HEK293 (cell line): ENCODE measurements at regions of chr6 and their contacts with region 1.

Region 1: DNA sequence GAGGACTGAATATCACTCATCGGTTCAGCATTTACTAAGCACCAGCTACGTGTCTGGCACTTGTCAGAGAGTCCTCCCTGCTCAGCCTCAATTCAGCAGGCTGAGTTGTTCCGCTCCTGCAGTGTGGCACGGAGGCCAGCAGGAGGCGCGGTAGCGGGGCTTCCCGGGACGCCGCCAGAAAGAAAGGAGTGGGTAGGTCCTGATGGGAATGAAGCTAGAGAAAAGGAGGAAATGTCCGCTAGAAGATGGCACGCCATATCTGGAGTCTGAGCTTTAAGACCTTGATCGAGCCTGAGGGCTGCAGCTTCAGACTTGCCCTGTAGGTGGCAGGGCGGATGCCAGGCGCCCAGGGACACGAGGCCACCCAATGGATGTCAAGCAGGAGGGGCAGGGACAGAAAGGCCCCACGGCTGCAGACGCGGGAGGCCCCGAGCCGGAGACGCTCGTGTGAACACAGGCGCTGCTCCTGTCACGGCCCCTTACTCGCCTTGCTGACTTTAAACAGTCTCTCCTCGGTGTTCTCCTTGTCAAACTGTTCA is 18.7 kb downstream of the SERPINB6 start:
- H3K4me3 ChIP-seq: no peak overlapping the region
- H3K27ac ChIP-seq: no peak overlapping the region
- H3K4me1 ChIP-seq: no peaks in the 10 kb centered on the region
- CTCF ChIP-seq: peak; percentile 74

Region 2: DNA sequence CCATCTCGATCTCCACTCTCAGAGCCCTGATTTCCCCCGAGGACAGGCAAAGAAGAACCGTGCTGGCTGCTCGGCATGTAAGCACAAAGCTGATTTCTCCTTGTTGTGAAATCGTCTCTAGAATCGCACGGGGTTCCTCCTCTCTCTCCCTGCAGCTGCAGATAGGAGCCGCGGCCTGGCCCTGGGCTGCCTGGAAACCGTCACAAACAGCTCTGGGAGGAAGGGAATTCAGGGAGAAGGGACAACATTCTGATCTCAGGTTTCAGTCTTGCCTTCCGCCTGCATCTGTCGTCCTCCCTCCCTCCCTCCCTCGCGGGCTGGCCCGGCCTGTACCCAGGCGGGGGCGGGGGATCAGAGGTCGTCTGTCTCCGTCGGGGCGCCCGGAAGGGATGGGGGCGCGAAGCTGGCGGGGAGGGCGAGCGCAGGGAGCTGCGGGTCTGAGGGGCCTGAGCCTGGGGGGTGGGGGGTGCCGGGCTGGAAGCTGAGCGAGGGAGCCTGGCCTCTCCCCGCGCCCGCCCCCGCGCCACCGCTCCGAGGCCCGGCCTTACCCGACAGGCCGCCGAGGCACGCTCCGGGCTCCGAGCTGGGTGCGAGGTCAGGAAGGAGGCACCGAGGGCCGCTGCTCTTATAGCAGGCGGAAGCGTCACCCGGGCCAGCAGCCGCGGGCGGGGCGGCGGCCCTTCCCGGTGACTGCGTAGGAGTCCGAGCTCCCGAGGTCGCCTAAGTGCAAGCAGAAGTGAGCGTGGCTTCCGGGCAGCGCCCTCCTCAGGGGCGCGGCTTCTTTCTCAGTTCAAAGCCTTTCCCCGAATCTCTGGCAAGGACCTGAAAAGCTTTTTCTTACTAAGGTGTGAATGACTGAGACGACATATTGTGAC is 111.1 kb before region 1 on chr6 and contains the start of gene SERPINB1:
- CTCF ChIA-PET with region 1: interaction called, 19 read pairs
- POLR2A ChIA-PET with region 1: no interaction called
- H3K4me3 ChIP-seq: peak within 1 kb of the TSS; percentile 49
- H3K27ac ChIP-seq: peak within 1 kb of the TSS; percentile 54; the same call in 1 of the 2 replicates
- H3K4me1 ChIP-seq: peaks cover 25% of the 10 kb centered on the region
- CTCF ChIP-seq: peak; percentile 64

Region 3: GRCh38 chr6:2921520-2922115 is 31.0 kb before region 1 on chr6:
- CTCF ChIA-PET with region 1: interaction called, 11 read pairs
- POLR2A ChIA-PET with region 1: no interaction called
- H3K4me3 ChIP-seq: no peak overlapping the region
- H3K27ac ChIP-seq: no peak overlapping the region
- H3K4me1 ChIP-seq: no peaks in the 10 kb centered on the region
- CTCF ChIP-seq: no peak

Region 4: DNA sequence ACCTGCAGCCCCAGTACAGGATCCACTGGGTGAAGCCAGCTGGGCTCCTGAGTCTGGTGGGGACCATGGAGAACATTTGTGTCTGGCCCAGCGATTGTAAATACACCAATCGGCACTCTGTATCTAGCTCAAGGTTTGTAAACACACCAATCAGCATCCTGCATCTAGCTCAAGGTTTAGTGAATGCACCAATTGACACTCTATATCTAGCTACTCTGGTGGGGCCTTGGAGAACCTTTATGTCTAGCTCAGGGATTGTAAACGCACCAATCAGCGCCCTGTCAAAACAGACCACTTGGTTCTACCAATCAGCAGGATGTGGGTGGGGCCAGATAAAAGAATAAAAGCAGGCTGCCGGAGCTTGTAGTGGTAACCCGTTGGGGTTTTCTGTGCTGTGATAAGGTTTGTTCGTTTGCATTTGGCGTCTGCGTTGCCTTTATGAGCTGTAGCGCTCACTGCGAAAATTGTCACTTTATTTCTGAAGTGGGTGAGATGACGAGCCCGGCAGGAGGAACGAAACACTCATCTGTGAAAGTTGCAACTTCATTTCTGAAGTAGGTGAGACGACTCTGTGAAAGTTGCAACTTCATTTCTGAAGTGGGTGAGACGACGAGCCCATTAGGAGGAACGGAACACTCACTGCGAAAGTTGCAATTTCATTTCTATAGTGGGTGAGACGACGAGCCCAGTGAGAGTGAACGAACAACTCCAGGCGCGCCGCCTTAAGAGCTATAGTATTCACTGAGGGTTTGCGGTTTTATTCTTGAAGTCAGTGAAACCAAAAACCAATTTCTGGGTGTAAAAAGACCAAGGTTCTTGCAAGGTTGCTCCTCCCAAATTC is 12.4 kb before region 1 on chr6:
- CTCF ChIA-PET with region 1: interaction called, 53 read pairs
- POLR2A ChIA-PET with region 1: interaction called, 5 read pairs
- H3K4me3 ChIP-seq: no peak overlapping the region
- H3K27ac ChIP-seq: no peak overlapping the region
- H3K4me1 ChIP-seq: no peaks in the 10 kb centered on the region
- CTCF ChIP-seq: no peak

Region 5: GRCh38 chr6:2971420-2972218 is 19.0 kb after region 1 on chr6 and contains the start of gene SERPINB6:
- CTCF ChIA-PET with region 1: interaction called, 11 read pairs
- POLR2A ChIA-PET with region 1: interaction called, 4 read pairs
- H3K4me3 ChIP-seq: peak within 1 kb of the TSS; percentile 70
- H3K27ac ChIP-seq: peak within 1 kb of the TSS; percentile 90
- H3K4me1 ChIP-seq: peaks cover 6% of the 10 kb centered on the region
- CTCF ChIP-seq: peak; percentile 47

Region 6: GRCh38 chr6:2976571-2977085 is 24.0 kb after region 1 on chr6:
- CTCF ChIA-PET with region 1: interaction called, 11 read pairs
- POLR2A ChIA-PET with region 1: no interaction called
- H3K4me3 ChIP-seq: no peak overlapping the region
- H3K27ac ChIP-seq: no peak overlapping the region
- H3K4me1 ChIP-seq: no peaks in the 10 kb centered on the region; the same call in 1 of the 2 replicates
- CTCF ChIP-seq: no peak

Region 7: GRCh38 chr6:3057063-3057770 is 104.6 kb after region 1 on chr6:
- CTCF ChIA-PET with region 1: interaction called, 15 read pairs
- POLR2A ChIA-PET with region 1: no interaction called
- H3K4me3 ChIP-seq: no peak overlapping the region
- H3K27ac ChIP-seq: no peak overlapping the region
- H3K4me1 ChIP-seq: no peaks in the 10 kb centered on the region
- CTCF ChIP-seq: no peak